CD8-positive, alpha-beta T cell (primary cell): ENCODE measurements at regions of chr15 and their contacts with region 1.

Region 1: GRCh38 chr15:73633111-73633990 is at the start of gene NPTN:
- DNase-seq: peak; percentile 96 to 99 (median 97)
- ATAC-seq: peak; percentile 90
- H3K4me3 ChIP-seq: peak within 1 kb of the TSS; percentile 51 to 74
- H3K4me3 Mint-ChIP-seq: peak within 1 kb of the TSS; percentile 82
- H3K27ac ChIP-seq: peak within 1 kb of the TSS; percentile 25 to 78
- H3K27ac Mint-ChIP-seq: peak within 1 kb of the TSS; percentile 81
- H3K4me1 ChIP-seq: peaks cover 33% of the 10 kb centered on the region
- H3K4me1 Mint-ChIP-seq: peaks cover 45% of the 10 kb centered on the region
- H3K27me3 ChIP-seq: no peaks in the 10 kb centered on the region
- H3K27me3 Mint-ChIP-seq: peaks cover 8% of the 10 kb centered on the region
- CTCF ChIP-seq: no peak
- total RNA-seq, gene NPTN: 12.5 to 18.2 TPM

Region 2: GRCh38 chr15:72272213-72273002 is 1360.9 kb before region 1 on chr15 and contains the start of gene PARP6:
- CTCF ChIA-PET with region 1: no interaction called
- POLR2A ChIA-PET with region 1: no interaction called
- intact Hi-C with region 1: loop called in 1 of 2 experiments (anchors 5 kb)
- DNase-seq: peak; percentile 97 to 100 (median 99)
- ATAC-seq: peak; percentile 95
- H3K4me3 ChIP-seq: peak within 1 kb of the TSS; percentile 82 to 89
- H3K4me3 Mint-ChIP-seq: peak within 1 kb of the TSS; percentile 87
- H3K27ac ChIP-seq: peak within 1 kb of the TSS; percentile 84 to 85
- H3K27ac Mint-ChIP-seq: peak within 1 kb of the TSS; percentile 93
- H3K4me1 ChIP-seq: peaks cover 28% of the 10 kb centered on the region
- H3K4me1 Mint-ChIP-seq: peaks cover 43% of the 10 kb centered on the region
- H3K27me3 ChIP-seq: no peaks in the 10 kb centered on the region
- H3K27me3 Mint-ChIP-seq: no peaks in the 10 kb centered on the region
- CTCF ChIP-seq: peak; percentile 61
- total RNA-seq, gene PARP6: 133 to 137 TPM

Region 3: GRCh38 chr15:73240866-73241499 is 392.4 kb before region 1 on chr15:
- CTCF ChIA-PET with region 1: interaction called, 4 read pairs
- POLR2A ChIA-PET with region 1: no interaction called
- intact Hi-C with region 1: loop called in 1 of 2 experiments (anchors 2 kb)
- DNase-seq: peak; percentile 48 to 78 (median 70)
- ATAC-seq: peak; percentile 34
- H3K4me3 ChIP-seq: no peak overlapping the region
- H3K4me3 Mint-ChIP-seq: no peak overlapping the region
- H3K27ac ChIP-seq: no peak overlapping the region
- H3K27ac Mint-ChIP-seq: no peak overlapping the region
- H3K4me1 ChIP-seq: no peaks in the 10 kb centered on the region
- H3K4me1 Mint-ChIP-seq: no peaks in the 10 kb centered on the region
- H3K27me3 ChIP-seq: no peaks in the 10 kb centered on the region
- H3K27me3 Mint-ChIP-seq: peaks cover 12% of the 10 kb centered on the region
- CTCF ChIP-seq: peak; percentile 94

Region 4: DNA sequence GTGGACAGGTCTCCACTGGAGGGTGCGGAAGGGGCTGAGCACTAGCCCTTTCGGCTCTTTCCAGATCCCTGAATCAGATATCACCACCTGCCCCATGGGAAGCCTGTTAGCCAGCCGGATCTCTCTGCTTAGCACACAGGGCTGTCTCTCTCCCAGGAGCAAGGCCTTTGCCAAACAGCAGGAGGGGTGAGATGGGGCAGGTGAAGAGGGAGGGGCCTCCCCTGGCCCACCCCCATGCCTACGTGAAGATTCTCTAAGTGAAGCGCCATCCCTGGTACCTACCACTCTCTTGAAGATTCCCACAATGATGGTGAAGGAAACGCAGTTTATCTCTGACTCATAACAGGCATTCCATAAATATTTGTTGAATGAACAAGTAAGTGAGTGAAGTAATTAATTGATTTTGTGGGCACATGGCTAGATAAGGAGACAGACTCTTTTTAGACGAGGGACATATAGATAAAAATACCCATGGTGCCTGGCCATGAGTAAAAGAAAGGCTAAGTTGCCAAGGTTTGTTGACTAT is 245.0 kb before region 1 on chr15:
- CTCF ChIA-PET with region 1: no interaction called
- POLR2A ChIA-PET with region 1: no interaction called
- intact Hi-C with region 1: no loop called
- DNase-seq: no peak
- ATAC-seq: no peak
- H3K4me3 ChIP-seq: no peak overlapping the region
- H3K4me3 Mint-ChIP-seq: no peak overlapping the region
- H3K27ac ChIP-seq: no peak overlapping the region
- H3K27ac Mint-ChIP-seq: no peak overlapping the region
- H3K4me1 ChIP-seq: no peaks in the 10 kb centered on the region
- H3K4me1 Mint-ChIP-seq: no peaks in the 10 kb centered on the region
- H3K27me3 ChIP-seq: peaks cover 0 to 3% of the 10 kb centered on the region in 2 experiments
- H3K27me3 Mint-ChIP-seq: peaks cover 26% of the 10 kb centered on the region
- CTCF ChIP-seq: no peak

Region 5: GRCh38 chr15:73585871-73586654 is 47.3 kb before region 1 on chr15:
- CTCF ChIA-PET with region 1: interaction called, 10 read pairs
- POLR2A ChIA-PET with region 1: no interaction called
- intact Hi-C with region 1: no loop called
- DNase-seq: no peak
- ATAC-seq: no peak
- H3K4me3 ChIP-seq: no peak overlapping the region
- H3K4me3 Mint-ChIP-seq: no peak overlapping the region
- H3K27ac ChIP-seq: no peak overlapping the region
- H3K27ac Mint-ChIP-seq: no peak overlapping the region
- H3K4me1 ChIP-seq: no peaks in the 10 kb centered on the region
- H3K4me1 Mint-ChIP-seq: no peaks in the 10 kb centered on the region
- H3K27me3 ChIP-seq: no peaks in the 10 kb centered on the region
- H3K27me3 Mint-ChIP-seq: no peaks in the 10 kb centered on the region
- CTCF ChIP-seq: no peak

Region 6: GRCh38 chr15:73677146-73677607 is 43.8 kb after region 1 on chr15:
- CTCF ChIA-PET with region 1: interaction called, 15 read pairs
- POLR2A ChIA-PET with region 1: no interaction called
- intact Hi-C with region 1: no loop called
- DNase-seq: peak; percentile 22 to 72 (median 55)
- ATAC-seq: no peak
- H3K4me3 ChIP-seq: no peak overlapping the region
- H3K4me3 Mint-ChIP-seq: no peak overlapping the region
- H3K27ac ChIP-seq: no peak overlapping the region
- H3K27ac Mint-ChIP-seq: no peak overlapping the region
- H3K4me1 ChIP-seq: no peaks in the 10 kb centered on the region
- H3K4me1 Mint-ChIP-seq: no peaks in the 10 kb centered on the region
- H3K27me3 ChIP-seq: peaks cover 0 to 9% of the 10 kb centered on the region in 2 experiments
- H3K27me3 Mint-ChIP-seq: peaks cover 34% of the 10 kb centered on the region
- CTCF ChIP-seq: peak; percentile 81

Region 7: DNA sequence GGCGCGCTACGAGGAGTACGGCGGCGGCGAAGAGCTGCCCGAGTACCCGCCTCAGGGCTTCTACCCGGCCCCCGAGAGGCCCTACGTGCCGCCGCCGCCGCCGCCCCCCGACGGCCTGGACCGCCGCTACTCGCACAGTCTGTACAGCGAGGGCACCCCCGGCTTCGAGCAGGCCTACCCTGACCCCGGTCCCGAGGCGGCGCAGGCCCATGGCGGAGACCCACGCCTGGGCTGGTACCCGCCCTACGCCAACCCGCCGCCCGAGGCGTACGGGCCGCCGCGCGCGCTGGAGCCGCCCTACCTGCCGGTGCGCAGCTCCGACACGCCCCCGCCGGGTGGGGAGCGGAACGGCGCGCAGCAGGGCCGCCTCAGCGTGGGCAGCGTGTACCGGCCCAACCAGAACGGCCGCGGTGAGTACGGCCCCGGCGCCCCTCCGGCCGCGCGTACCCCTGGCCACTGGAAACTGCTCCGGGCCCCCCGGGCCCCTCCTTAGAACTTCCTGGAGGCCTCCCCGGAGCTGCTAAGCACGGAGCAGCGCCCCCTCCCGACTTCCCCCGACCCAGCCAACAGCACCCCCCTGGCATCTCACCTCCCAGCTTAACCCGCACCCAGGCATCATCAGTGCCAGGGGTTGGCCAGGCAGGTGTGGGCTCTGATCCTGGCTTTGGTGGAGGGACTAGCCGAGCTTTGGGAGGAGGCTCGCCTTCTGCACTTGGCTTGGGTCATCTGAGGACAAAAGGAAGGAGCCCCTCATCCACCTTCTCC is 294.3 kb after region 1 on chr15:
- CTCF ChIA-PET with region 1: no interaction called
- POLR2A ChIA-PET with region 1: interaction called, 3 read pairs
- intact Hi-C with region 1: loop called in 1 of 2 experiments (anchors 10 kb)
- DNase-seq: peak; percentile 56 to 87 (median 77)
- ATAC-seq: peak; percentile 88
- H3K4me3 ChIP-seq: peak overlapping the region; percentile 49 to 79
- H3K4me3 Mint-ChIP-seq: peak overlapping the region; percentile 79
- H3K27ac ChIP-seq: peak overlapping the region in 1 of 2 experiments; percentile 41
- H3K27ac Mint-ChIP-seq: peak overlapping the region; percentile 20
- H3K4me1 ChIP-seq: peaks cover 27% of the 10 kb centered on the region
- H3K4me1 Mint-ChIP-seq: peaks cover 38% of the 10 kb centered on the region
- H3K27me3 ChIP-seq: no peaks in the 10 kb centered on the region
- H3K27me3 Mint-ChIP-seq: no peaks in the 10 kb centered on the region
- CTCF ChIP-seq: peak; percentile 83